Heart left ventricle (tissue), 16 donors: ENCODE measurements at regions of chr11 and their contacts with region 1.

Region 1: DNA sequence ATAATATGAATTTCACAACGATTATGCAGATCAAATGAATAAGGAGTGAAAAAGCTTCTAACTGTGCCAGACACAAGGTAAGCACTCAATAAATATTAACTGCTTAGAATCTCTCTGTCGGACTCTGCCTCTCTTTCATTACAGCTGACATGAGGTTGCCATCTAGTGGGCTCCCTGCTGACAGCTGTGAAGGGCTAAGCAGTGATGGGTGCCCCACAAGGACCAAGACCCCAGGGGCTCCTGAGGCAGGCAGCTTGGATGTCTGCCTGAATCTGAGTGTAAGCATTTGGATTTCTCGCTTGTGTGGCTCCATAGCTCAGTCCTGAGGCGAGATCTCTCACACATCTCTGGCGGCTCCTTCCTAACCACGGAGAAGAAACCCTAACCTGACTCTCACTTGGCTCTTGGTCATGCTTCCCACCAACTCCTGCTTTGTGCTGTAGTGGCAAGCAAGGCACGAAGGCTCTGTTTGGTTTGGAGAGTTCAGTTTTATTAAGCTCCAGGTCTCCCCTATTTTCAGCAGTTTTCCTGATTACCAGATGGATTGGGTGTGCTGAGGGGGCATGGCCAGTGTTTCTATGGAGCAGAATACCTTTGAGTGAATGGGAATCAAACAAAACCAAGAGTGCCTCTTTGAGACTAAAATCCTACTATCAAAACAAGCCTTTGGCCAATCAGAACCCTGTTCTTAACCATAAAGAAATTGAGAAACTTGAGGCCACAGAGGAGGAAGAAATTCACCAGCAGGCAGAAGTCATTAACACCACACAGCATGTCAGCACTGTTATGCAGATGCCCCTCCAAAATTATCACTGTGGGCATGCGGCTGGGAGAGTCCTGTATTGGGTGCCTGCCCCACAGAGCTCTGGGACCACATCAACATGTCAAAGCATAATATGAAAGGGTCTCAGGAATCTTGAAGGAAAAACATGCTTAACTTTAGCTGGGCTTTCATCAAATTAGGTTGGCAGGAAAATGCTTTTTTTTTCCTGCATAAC is 152.8 kb upstream of the NTM start:
- DNase-seq: no peak
- ATAC-seq: peak in 3 of 4 donors; percentile 41 to 59 (median 41)
- H3K4me3 ChIP-seq: no peak overlapping the region
- H3K27ac ChIP-seq: no peak overlapping the region
- H3K4me1 ChIP-seq: no peaks in the 10 kb centered on the region
- H3K27me3 ChIP-seq: peaks cover 0 to 6% (median 0%) of the 10 kb centered on the region in 9 donors
- CTCF ChIP-seq: peak in 11 of 12 donors; percentile 6 to 57 (median 33)
- POLR2A ChIP-seq: no peak

Region 2: DNA sequence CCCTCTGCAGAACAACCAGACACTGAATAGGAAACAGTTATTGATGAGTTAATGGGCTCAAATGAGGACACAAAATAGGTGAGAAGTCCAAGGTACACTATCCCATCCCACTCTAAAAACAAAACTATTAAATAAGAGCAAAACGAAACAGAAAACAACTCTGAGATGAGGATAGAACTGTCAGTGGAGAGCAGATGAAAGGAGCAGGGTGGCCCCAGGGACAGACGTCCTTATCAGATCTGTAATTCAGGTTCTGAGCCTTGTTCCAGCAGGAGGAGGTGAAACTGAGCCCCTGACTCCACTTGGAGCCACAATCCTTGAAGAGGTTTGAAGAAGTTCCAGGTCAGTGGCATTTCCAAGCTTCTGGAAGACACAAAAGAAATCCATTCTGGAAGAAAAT is 292.8 kb before region 1 on chr11:
- intact Hi-C with region 1: loop called in 3 of 10 experiments (anchors 10 kb)
- DNase-seq: no peak
- ATAC-seq: no peak
- H3K4me3 ChIP-seq: no peak overlapping the region
- H3K27ac ChIP-seq: no peak overlapping the region
- H3K4me1 ChIP-seq: no peaks in the 10 kb centered on the region
- H3K27me3 ChIP-seq: no peaks in the 10 kb centered on the region
- CTCF ChIP-seq: no peak
- POLR2A ChIP-seq: no peak

Region 3: GRCh38 chr11:131064373-131064991 is 153.1 kb before region 1 on chr11:
- intact Hi-C with region 1: loop called in 9 of 10 experiments (anchors 1 to 10 kb)
- DNase-seq: peak in 4 of 5 donors; percentile 20 to 49 (median 41)
- ATAC-seq: peak in 3 of 4 donors; percentile 53 to 83 (median 71)
- H3K4me3 ChIP-seq: no peak overlapping the region
- H3K27ac ChIP-seq: no peak overlapping the region
- H3K4me1 ChIP-seq: no peaks in the 10 kb centered on the region
- H3K27me3 ChIP-seq: peaks cover 0 to 34% (median 5%) of the 10 kb centered on the region in 9 donors
- CTCF ChIP-seq: peak; percentile 52 to 85 (median 74)
- POLR2A ChIP-seq: no peak